ENCODE measurements at regions of chr2 and their contacts with region 1.

Region 1: GRCh38 chr2:241363316-241363879 is 7.3 kb downstream of the FARP2 start:
- DNase-seq: peak; percentile 19 to 62
- ATAC-seq: peak; percentile 82 to 91 (median 90)
- H3K4me3 ChIP-seq: peak overlapping the region; percentile 51
- H3K27ac ChIP-seq: peak overlapping the region; percentile 62
- H3K4me1 ChIP-seq: peaks cover 24% of the 10 kb centered on the region
- H3K27me3 ChIP-seq: no peaks in the 10 kb centered on the region
- CTCF ChIP-seq: no peak

Region 2: GRCh38 chr2:241609859-241610793 is 246.7 kb after region 1 on chr2:
- intact Hi-C with region 1: loop called in 1 of 2 experiments (anchors 5 kb)
- DNase-seq: peak; percentile 87 to 93
- ATAC-seq: peak; percentile 96 to 98 (median 96)
- H3K4me3 ChIP-seq: peak overlapping the region; percentile 78
- H3K27ac ChIP-seq: peak overlapping the region; percentile 77
- H3K4me1 ChIP-seq: peaks cover 24% of the 10 kb centered on the region
- H3K27me3 ChIP-seq: no peaks in the 10 kb centered on the region
- CTCF ChIP-seq: peak; percentile 64

Region 3: GRCh38 chr2:241637000-241637791 is 273.8 kb after region 1 on chr2 and contains the starts of genes ATG4B and THAP4:
- intact Hi-C with region 1: loop called in 1 of 2 experiments (anchors 10 kb)
- DNase-seq: peak; percentile 88 to 93
- ATAC-seq: peak; percentile 92 to 94 (median 92)
- H3K4me3 ChIP-seq: peak within 1 kb of the TSS; percentile 87
- H3K27ac ChIP-seq: peak within 1 kb of the TSS; percentile 99
- H3K4me1 ChIP-seq: peaks cover 30% of the 10 kb centered on the region
- H3K27me3 ChIP-seq: no peaks in the 10 kb centered on the region
- CTCF ChIP-seq: no peak
- total RNA-seq, gene ATG4B: 33.7 to 51.3 (median 37.3) TPM
- total RNA-seq, gene THAP4: 64.9 to 96.7 (median 79.4) TPM

Region 4: DNA sequence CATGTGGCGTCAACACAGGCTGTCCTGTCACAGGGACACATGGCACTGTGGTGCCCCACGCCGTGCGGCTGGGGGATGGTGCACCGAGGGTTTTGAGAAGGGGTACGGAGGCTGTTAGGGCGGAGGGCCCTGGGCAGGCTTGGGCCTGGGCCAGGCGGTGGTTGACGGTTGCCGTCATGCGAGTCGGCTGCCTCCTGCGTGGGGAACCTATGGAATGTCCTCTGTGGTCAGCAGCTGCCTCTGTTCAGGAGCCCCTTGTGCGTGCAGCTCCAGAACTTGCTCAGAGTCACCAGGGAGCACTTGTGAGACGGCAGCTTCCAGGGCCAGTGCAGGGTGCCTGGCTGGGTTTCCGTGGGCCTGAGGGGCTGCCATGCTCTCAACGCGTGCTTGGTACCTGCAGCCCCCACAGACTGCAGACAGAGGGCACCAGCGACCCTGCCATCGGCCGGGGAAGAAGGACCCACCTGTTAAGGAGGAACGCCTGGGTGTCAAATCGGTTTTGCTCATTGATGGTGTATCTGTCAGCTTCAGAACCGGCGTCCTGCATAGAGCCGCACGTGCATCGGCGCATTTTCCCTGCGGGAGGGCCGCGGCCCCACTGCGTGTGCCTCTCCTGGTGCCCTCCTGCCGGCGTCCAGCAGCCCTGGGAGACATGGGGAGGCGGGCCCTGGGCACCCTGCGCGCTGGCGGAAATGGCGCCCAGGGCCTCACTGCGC is 361.0 kb after region 1 on chr2:
- intact Hi-C with region 1: no loop called
- DNase-seq: no peak
- ATAC-seq: no peak
- H3K4me3 ChIP-seq: no peak overlapping the region
- H3K27ac ChIP-seq: no peak overlapping the region
- H3K4me1 ChIP-seq: peaks cover 16% of the 10 kb centered on the region
- H3K27me3 ChIP-seq: no peaks in the 10 kb centered on the region
- CTCF ChIP-seq: peak; percentile 29